Activated CD4-positive, alpha-beta T cell treated with anti-CD3 and anti-CD28 coated beads for 36 hours (primary cell): ENCODE measurements at regions of chr2 and their contacts with region 1.

Region 1: GRCh38 chr2:78676921-78677696 is 348.4 kb upstream of the REG3G start:
- DNase-seq: no peak
- ATAC-seq: no peak
- H3K4me3 Mint-ChIP-seq: no peak overlapping the region
- H3K27ac Mint-ChIP-seq: no peak overlapping the region
- H3K4me1 Mint-ChIP-seq: no peaks in the 10 kb centered on the region
- H3K27me3 Mint-ChIP-seq: no peaks in the 10 kb centered on the region

Region 2: DNA sequence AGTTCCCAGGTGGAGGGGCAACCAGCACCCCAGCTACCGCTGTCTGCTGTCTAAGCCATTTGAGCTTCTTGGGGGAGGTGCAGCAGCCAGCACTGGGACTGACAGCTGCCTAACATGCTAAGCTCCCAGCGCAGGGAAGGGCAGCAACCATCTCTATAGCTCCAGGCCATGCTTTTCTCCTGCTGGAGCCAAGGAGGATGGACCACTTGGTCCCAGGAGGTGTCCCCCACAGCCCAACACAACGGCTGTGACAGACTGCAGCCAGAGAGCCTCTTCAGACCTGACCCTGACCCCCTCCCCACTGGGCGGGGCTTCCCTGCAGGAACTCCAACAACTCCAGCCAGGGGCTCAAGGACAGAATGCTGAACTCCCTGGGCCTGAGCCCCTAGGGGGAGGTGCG is 22.2 kb before region 1 on chr2:
- CTCF ChIA-PET with region 1: no interaction called
- POLR2A ChIA-PET with region 1: no interaction called
- intact Hi-C with region 1: no loop called
- DNase-seq: no peak
- ATAC-seq: no peak
- H3K4me3 Mint-ChIP-seq: no peak overlapping the region
- H3K27ac Mint-ChIP-seq: no peak overlapping the region
- H3K4me1 Mint-ChIP-seq: no peaks in the 10 kb centered on the region
- H3K27me3 Mint-ChIP-seq: no peaks in the 10 kb centered on the region

Region 3: GRCh38 chr2:78992451-78992806 is 315.3 kb after region 1 on chr2:
- CTCF ChIA-PET with region 1: no interaction called
- POLR2A ChIA-PET with region 1: no interaction called
- intact Hi-C with region 1: loop called in 1 of 2 experiments (anchors 10 kb)
- DNase-seq: no peak
- ATAC-seq: no peak
- H3K4me3 Mint-ChIP-seq: no peak overlapping the region
- H3K27ac Mint-ChIP-seq: no peak overlapping the region
- H3K4me1 Mint-ChIP-seq: no peaks in the 10 kb centered on the region
- H3K27me3 Mint-ChIP-seq: peaks cover 26% of the 10 kb centered on the region